ENCODE measurements at regions of chr11 and their contacts with region 1.

Region 1: DNA sequence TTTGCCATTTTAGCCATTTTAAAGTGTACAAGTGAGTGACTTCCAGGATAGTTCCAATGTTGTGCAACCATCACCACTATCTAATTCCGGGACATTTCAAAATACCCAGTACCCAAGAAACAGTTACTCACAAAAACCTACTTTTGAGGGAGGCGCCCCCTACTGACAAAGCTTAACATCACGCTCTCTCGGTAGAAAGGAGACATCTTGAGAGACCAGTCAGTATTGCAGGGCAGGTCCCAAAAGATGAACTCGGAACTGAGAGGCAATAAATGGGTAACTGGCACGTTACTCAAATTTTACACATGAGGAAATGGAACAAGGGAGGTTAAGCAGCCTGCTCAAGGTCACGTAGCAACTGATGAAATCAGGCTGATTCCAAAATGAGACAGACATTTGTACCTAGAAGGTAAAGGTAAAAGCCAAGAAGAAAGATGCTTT is 50.0 kb upstream of the POU2AF1 start:
- DNase-seq: peak; percentile 66
- ATAC-seq: no peak
- H3K4me3 ChIP-seq: no peak overlapping the region
- H3K27ac ChIP-seq: no peak overlapping the region
- H3K4me1 ChIP-seq: no peaks in the 10 kb centered on the region
- H3K27me3 ChIP-seq: peaks cover 29% of the 10 kb centered on the region
- CTCF ChIP-seq: peak; percentile 95

Region 2: DNA sequence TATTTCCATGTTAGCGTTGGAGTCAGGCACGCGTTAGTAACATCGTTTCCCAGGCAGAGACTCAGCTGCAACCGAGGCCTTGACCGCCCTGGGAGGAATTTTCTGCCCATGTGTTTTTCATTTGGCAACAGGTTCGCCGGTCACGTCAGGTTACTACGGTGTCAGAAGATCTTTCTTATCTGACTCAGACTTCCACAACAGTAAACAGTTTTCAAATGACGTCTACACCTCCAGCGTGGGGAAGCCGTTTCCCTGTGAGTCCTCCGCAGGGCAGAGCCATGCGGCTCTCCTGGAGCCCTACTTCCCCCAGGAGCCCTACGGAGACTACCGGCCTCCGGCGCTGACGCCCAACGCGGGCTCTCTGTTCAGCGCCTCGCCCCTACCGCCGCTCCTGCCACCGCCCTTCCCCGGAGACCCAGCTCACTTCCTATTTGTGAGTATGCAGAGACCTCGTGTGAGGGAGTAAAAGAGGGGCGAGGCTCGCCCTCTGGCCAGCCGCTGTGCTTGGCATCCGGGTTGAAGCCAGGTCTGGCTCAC is 145.1 kb before region 1 on chr11:
- CTCF ChIA-PET with region 1: no interaction called
- POLR2A ChIA-PET with region 1: no interaction called
- intact Hi-C with region 1: loop called (anchors 5 kb)
- DNase-seq: no peak
- ATAC-seq: no peak
- H3K4me3 ChIP-seq: no peak overlapping the region
- H3K27ac ChIP-seq: no peak overlapping the region
- H3K4me1 ChIP-seq: no peaks in the 10 kb centered on the region
- H3K27me3 ChIP-seq: peaks cover 61% of the 10 kb centered on the region
- CTCF ChIP-seq: no peak

Measured in PC-3 (cell line).